Right ventricle myocardium superior (tissue), 1 donor: ENCODE measurements at regions of chr11 and their contacts with region 1.

Region 1: DNA sequence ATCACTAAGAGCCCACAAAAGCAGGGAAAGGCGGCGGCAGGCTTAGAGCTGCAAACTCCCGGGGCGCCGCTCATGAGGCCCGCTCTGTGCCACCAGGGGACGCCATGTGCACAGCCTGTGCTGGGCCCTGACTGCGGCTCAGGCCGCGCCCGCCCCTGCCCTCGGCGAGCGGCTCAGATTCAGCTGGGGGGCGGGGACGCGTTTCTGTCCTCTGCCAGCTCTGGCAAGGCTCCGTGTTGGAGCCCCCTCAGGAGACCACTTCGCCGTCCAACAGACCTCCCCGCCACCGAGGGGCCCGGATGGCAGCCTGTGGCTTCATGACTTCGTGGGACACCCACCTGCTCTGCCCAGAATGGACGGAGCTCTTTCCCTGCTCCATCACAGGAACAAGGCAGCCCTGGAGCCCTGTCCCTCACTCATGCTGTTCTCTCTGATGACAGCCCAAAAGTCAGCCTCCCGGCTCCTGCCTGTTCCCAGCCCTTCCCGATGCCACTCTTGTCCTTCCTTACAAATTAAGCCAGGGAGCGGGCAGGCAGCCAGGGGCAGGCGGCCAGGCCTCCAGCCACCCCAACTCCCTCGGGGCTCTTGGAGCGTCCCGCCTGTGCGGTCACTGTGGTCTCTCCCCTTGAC is 69.1 kb downstream of the NAT10 start:
- DNase-seq: peak; percentile 91
- ATAC-seq: peak; percentile 100

Region 2: DNA sequence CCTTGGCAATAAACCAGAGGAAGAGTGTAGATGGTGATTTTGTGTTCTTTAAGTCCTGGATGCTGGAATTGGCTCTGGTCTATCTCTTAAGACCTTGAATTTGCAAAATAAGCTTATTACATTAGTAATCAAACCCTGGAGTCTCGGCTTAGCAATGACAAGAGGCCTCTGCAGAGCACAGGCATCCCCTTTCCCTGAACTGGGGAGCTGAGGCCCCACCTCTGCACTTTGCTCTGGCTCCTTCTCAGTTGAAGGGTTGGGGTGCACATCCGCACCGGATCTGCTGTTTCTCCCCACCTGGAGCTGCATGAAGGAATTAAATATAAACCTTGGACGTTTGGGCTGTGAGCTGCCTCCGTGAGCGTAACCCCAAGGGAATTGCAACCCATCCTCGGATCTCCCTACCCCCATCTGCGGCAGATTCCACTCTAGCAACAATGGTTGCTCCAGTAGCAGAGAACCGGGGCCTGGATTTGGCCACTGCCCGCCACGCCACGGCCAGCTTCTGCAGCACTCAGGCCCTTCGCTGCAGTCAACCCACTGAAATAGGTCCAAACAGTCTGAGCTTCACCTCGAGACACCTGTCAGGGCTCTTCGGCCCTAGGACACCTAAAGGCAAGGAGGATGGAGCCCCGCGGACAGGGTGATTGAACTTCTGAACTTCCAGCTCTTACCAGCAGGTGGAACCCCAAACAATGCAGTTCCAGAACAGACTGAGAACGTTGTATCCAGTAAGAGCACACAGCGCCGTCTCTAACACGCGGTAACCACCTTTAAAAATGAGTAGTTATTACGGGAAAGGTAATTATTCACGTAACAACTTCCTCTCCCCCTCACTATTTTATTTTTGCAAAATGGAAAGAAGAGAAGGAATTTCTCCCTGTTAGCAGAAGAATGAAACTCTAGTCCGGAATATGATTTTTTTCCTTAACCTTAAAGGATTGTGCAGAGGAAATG is 177.8 kb before region 1 on chr11:
- intact Hi-C with region 1: loop called (anchors 5 kb)
- DNase-seq: peak; percentile 54
- ATAC-seq: peak; percentile 97

Region 3: DNA sequence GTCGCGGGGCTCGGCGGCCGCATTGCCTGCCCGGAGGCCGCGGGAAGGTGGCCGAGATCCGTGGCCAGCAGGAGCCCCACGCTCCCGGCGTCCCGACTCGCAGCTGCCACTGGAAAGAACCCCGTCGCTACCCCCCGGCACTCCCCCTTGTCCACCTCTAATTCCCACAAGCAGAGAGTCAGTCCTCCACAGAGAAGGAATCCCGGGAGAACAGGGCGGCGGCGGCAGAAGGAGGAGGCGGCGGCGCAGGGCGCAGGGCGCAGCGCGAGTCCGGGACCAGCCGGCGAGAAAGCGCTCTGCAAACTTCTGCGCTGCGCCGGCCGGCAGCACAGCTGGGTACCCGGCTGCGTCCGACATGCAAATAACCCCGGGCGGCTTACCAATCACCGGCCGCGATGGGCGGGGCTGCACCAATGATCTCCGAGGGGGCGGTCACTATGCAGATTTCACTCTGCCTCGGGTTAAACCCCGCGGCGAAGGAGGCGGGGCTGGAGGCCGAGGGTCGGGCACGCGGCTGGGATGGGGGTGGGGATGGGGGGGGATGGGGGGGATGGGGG is 183.3 kb after region 1 on chr11 and contains the start of gene ABTB2:
- intact Hi-C with region 1: loop called (anchors 2 kb)
- DNase-seq: peak; percentile 99
- ATAC-seq: peak; percentile 94
- total RNA-seq, gene ABTB2: 15.9 TPM